ENCODE measurements at regions of chr10 and their contacts with region 1.

Region 1: DNA sequence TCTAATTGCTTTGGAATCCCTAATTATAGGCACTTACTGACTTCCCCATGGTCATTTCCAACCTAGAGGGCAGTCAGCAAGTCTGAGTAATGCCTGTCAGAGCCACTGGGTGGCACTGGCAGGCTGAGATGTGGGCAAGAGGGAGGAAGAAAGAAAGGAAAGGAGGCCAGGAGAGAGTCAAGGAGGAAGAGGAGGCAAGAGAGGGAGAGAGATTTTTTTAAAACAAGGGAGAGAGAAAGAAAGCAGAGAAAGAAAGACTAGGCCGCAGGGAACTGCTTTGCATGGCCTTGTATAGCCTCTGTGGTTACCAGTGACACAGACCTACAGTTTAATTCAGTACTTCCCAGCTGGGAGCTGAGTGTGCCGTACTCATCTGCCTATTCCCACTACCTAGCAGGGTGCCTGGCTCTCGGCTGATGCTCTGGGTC is 210.4 kb upstream of the ADO start:
- DNase-seq: peak; percentile 60 to 87 (median 76)
- ATAC-seq: peak; percentile 86 to 89
- H3K4me3 ChIP-seq: no peak overlapping the region
- H3K27ac ChIP-seq: no peak overlapping the region
- H3K4me1 ChIP-seq: no peaks in the 10 kb centered on the region
- H3K27me3 ChIP-seq: no peaks in the 10 kb centered on the region

Region 2: DNA sequence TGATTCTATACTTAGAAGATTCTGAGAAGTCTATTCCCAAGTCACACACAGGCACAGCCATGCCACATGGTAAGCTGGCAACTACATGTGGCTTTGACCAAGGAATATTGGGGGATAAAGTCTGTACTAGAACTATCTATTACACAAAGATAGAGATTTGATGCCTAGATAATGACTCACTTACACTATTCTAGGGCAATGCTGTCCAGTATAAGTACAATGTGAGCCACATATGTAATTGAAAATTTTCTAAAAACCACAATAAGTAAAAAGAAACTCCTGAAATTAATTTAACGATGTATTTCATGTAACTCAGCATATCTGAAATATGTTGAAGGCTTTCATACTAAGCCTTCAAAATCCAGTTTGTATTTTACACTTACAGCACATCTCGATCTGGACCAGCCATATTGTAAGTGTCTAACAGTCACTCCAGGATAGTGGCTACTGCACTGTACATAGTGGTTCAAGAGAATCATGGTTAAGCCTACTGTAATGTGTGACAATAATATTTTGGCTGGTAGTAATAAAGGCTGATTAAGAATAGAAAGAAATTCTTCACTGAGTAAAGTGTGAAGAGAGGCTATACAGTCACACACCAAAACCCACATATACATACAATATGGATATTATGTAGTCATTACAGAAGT is 388.2 kb before region 1 on chr10:
- intact Hi-C with region 1: no loop called
- DNase-seq: no peak
- ATAC-seq: no peak
- H3K4me3 ChIP-seq: no peak overlapping the region
- H3K27ac ChIP-seq: no peak overlapping the region
- H3K4me1 ChIP-seq: no peaks in the 10 kb centered on the region
- H3K27me3 ChIP-seq: no peaks in the 10 kb centered on the region

Region 3: DNA sequence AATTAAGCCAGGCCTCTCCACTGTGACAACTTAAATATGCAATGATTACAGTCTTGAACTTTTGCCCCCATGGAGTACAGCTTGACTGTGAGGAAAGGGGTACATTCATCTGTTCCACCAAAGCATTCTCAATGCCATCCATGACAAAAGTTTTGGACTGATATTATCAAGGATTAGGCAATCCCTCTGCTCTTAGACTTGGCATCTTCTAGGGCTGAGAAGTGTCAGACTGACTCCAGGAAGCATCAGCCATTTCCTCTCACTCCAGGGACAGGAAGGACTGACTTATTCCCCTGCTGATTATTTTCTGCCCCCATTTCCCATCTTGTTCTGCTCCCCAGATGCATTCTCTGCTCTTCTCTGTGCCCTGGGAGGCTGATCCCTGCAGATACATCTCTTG is 150.2 kb before region 1 on chr10:
- intact Hi-C with region 1: loop called in 1 of 4 experiments (anchors 10 kb)
- DNase-seq: no peak
- ATAC-seq: peak; percentile 32 to 37
- H3K4me3 ChIP-seq: no peak overlapping the region
- H3K27ac ChIP-seq: no peak overlapping the region
- H3K4me1 ChIP-seq: peaks cover 3% of the 10 kb centered on the region
- H3K27me3 ChIP-seq: no peaks in the 10 kb centered on the region

Region 4: DNA sequence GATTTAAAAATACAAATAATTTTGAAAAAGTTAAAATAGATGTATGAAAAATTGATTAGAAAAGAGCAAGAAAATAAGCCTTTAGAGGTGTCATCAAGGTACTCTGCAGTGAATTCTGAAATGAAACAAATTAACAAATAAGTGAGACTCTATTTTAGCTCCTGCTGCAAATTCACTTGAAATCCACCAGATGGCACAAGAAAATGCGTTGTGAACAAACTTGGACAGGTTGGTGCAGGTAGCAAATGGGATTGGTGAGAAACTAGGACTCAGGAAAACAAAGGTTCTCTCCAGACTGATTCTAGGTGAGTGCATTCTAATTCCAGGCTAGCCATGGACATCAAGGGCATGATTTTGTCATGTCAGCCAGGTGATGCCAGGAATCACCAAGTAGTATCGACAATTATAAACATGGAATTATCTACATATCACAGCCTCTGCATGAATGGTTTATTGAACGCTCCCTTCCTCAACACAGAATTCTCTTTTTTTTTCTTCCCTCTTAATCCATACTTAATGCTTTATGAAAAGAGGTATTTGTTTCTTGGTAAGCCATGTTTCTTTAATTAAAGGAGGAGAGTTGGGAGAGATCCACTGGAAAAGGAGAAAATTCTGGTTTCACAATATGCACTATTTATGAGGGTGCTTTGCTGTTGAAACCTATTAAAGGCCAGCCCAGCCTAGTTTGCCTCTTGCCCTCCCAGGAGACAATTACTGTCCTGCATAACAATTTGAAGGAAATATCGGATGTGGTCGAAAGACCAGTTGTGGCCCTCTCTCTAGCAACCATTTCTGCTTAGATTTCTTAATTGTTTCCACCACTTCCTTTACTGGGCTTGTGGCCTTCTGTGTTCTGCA is 101.9 kb before region 1 on chr10:
- intact Hi-C with region 1: no loop called
- DNase-seq: no peak
- ATAC-seq: peak; percentile 51 to 59
- H3K4me3 ChIP-seq: no peak overlapping the region
- H3K27ac ChIP-seq: no peak overlapping the region
- H3K4me1 ChIP-seq: peaks cover 2% of the 10 kb centered on the region
- H3K27me3 ChIP-seq: no peaks in the 10 kb centered on the region

Region 5: DNA sequence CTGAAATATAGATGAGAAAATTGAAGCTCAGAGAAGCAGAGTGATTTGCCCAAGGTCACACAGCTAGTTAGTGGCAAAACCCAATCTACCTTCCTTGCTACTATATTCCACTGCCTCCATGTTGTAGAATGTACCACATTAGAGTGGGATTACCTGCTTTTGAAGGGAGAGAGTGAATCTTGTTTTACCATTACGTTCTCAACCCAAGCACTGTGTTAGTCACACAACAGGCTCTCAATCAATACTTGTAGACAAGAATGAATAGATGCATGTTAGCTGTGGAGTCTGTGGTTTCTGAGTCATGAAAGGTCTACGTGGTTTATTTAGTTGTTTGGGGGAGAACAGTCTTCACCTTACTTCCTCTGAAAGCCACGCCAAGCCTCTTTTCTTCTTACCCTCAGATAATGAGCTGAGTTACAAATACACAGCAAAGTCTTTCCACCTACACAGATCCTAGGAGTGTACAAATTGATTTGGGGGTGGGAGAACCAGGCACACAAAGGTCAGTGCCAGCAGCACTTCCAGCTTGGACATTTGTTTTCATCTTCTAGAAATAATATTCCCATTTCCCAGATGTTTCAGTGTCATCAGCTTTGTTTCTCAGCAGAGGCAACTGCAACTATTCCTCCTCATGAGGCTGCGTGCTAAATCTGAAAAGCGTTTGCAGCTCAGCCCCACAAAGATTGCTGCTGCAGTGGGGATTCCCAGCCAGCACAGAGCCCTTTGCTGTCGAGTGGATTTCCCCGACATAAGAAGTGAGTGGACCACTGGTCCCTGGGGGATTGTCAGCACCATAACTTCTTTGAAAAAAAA is 138.9 kb after region 1 on chr10:
- intact Hi-C with region 1: no loop called
- DNase-seq: no peak
- ATAC-seq: no peak
- H3K4me3 ChIP-seq: no peak overlapping the region
- H3K27ac ChIP-seq: no peak overlapping the region
- H3K4me1 ChIP-seq: no peaks in the 10 kb centered on the region
- H3K27me3 ChIP-seq: no peaks in the 10 kb centered on the region

Region 6: GRCh38 chr10:62748386-62748785 is 154.3 kb after region 1 on chr10:
- intact Hi-C with region 1: no loop called
- DNase-seq: no peak
- ATAC-seq: no peak
- H3K4me3 ChIP-seq: no peak overlapping the region
- H3K27ac ChIP-seq: no peak overlapping the region
- H3K4me1 ChIP-seq: no peaks in the 10 kb centered on the region
- H3K27me3 ChIP-seq: no peaks in the 10 kb centered on the region

Region 7: DNA sequence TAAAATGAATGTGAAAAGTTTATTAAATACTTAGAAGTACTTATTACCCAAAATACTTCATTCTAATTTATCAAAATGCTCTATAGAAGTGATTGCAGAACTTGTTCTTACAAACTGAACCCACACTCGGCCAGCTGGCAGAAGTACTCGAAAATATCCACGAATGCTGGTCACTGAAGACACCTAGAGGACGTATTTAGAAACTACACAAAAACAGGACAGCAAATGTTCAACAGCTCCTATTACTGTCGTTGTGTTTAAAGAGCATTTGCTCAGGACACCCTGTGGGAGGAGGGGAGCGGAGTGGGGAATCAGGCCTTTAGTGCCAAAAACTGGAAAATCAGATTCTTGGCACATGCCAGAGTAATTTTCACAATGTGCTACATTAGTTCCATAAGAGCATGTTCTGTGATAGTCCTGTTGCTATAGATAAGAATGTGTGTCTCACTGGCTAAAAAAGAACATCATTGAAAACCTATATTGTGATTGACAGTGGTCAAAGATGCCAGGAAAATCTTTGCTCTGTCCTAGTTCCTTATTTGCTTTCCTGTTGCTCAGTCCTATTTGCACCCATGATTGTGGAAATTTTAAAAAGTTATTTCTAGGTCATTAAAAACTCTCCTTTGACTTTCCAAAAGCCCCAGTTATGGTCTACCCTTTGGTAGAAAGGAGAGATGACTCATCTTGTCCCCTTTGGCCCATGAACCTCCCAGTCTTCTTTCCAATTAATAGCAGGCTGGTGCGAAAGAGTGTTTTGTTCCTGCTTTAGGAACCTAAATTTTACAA is 490.0 kb after region 1 on chr10:
- intact Hi-C with region 1: loop called (anchors 5 to 10 kb)
- DNase-seq: peak; percentile 69 to 80 (median 72)
- ATAC-seq: peak; percentile 85 to 86
- H3K4me3 ChIP-seq: no peak overlapping the region
- H3K27ac ChIP-seq: no peak overlapping the region
- H3K4me1 ChIP-seq: no peaks in the 10 kb centered on the region
- H3K27me3 ChIP-seq: peaks cover 2% of the 10 kb centered on the region

Region 8: GRCh38 chr10:63157845-63158624 is 563.9 kb after region 1 on chr10:
- intact Hi-C with region 1: loop called in 3 of 4 experiments (anchors 5 to 10 kb)
- DNase-seq: no peak
- ATAC-seq: peak; percentile 64 to 74
- H3K4me3 ChIP-seq: no peak overlapping the region
- H3K27ac ChIP-seq: no peak overlapping the region
- H3K4me1 ChIP-seq: no peaks in the 10 kb centered on the region
- H3K27me3 ChIP-seq: no peaks in the 10 kb centered on the region

Measured in right cardiac atrium (tissue), 5 donors.